Stomach (tissue), 19 donors: ENCODE measurements at regions of chr18 and their contacts with region 1.

Region 1: DNA sequence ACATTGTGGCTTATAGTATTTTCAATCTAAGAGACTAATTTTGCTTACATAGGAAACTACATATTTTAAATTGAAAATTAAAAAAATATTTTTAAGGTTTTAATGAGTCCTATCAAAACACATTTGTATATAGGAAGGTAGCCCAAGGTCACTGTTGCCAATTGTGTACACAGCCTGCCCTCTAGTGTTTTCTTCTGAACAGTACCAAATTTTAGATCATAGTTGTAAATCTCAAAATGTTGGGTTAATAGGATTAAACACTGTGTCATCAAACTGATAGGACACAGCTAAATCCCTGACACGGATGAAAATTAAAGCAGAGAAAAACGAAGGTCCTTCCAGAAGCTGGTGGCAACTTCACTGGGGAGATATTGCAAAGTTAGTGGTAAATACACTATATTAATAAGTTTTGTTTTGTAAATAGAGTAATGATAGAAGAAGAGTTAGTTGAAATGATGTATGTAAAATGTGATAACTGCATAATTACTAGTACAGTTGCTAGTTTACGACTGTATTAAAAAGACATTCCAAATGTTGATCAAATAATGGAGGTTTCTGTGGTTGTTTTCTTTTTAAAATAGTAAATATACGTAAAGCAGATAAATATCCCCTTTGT is 19.7 kb downstream of the CLUL1 start:
- DNase-seq: peak in 1 of 2 donors; percentile 71
- H3K4me3 ChIP-seq: no peak overlapping the region
- H3K27ac ChIP-seq: no peak overlapping the region
- H3K4me1 ChIP-seq: peaks cover 0 to 11% (median 3%) of the 10 kb centered on the region in 4 donors
- H3K27me3 ChIP-seq: no peaks in the 10 kb centered on the region
- CTCF ChIP-seq: peak in 5 of 7 experiments; percentile 35 to 65 (median 47)
- EP300 ChIP-seq: no peak
- POLR2A ChIP-seq: no peak

Region 2: GRCh38 chr18:286515-287310 is 329.8 kb before region 1 on chr18:
- intact Hi-C with region 1: loop called (anchors 5 kb)
- DNase-seq: peak in 1 of 2 donors; percentile 58
- H3K4me3 ChIP-seq: no peak overlapping the region
- H3K27ac ChIP-seq: no peak overlapping the region
- H3K4me1 ChIP-seq: no peaks in the 10 kb centered on the region
- H3K27me3 ChIP-seq: no peaks in the 10 kb centered on the region
- CTCF ChIP-seq: peak in 3 of 7 experiments; percentile 20 to 41 (median 28)
- EP300 ChIP-seq: no peak
- POLR2A ChIP-seq: no peak